GM12878 (cell line): ENCODE measurements at regions of chr6 and their contacts with region 1.

Region 1: DNA sequence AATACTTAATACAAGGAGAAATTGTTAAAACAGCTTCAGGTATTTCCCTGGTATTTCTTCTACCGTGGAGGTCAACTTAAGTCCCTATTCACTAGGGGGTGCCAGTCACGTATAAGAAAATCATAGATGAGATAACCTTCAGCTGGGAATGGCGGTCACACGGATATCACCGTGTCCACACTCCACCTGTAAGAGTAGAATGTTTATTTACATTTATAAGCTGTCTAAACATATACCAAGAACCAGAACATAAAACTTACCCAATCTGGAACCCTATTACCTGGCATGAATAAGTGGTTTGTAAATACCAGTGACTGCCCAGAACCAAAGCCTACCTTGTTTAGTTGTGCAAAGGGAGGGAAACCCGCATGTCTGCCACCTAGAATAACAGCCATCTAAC is 1.9 kb upstream of the ELOVL4 start:
- DNase-seq: peak; percentile 7
- ATAC-seq: peak; percentile 89
- H3K4me3 ChIP-seq: no peak overlapping the region
- H3K27ac ChIP-seq: no peak overlapping the region
- H3K4me1 ChIP-seq: 0 out of 2 replicates have a peak, but pooled peaks cover 3% of the 10 kb centered on the region
- H3K27me3 ChIP-seq: peaks cover 2 to 17% of the 10 kb centered on the region in 2 experiments
- CTCF ChIP-seq: peak; percentile 65 to 71 (median 68)
- EP300 ChIP-seq: no peak
- POLR2A ChIP-seq: no peak
- RAD21 ChIP-seq: peak; percentile 82

Region 2: GRCh38 chr6:79984261-79984660 is 35.0 kb after region 1 on chr6:
- CTCF ChIA-PET with region 1: interaction called, 16 read pairs
- POLR2A ChIA-PET with region 1: no interaction called
- RAD21 ChIA-PET with region 1: no interaction called
- SMC1A ChIA-PET with region 1: interaction called, 5 read pairs
- in situ Hi-C with region 1: no loop called
- intact Hi-C with region 1: no loop called
- DNase-seq: no peak
- ATAC-seq: peak; percentile 63
- H3K4me3 ChIP-seq: no peak overlapping the region
- H3K27ac ChIP-seq: no peak overlapping the region
- H3K4me1 ChIP-seq: no peaks in the 10 kb centered on the region
- H3K27me3 ChIP-seq: no peaks in the 10 kb centered on the region
- CTCF ChIP-seq: no peak
- EP300 ChIP-seq: no peak
- POLR2A ChIP-seq: no peak
- RAD21 ChIP-seq: no peak

Region 3: DNA sequence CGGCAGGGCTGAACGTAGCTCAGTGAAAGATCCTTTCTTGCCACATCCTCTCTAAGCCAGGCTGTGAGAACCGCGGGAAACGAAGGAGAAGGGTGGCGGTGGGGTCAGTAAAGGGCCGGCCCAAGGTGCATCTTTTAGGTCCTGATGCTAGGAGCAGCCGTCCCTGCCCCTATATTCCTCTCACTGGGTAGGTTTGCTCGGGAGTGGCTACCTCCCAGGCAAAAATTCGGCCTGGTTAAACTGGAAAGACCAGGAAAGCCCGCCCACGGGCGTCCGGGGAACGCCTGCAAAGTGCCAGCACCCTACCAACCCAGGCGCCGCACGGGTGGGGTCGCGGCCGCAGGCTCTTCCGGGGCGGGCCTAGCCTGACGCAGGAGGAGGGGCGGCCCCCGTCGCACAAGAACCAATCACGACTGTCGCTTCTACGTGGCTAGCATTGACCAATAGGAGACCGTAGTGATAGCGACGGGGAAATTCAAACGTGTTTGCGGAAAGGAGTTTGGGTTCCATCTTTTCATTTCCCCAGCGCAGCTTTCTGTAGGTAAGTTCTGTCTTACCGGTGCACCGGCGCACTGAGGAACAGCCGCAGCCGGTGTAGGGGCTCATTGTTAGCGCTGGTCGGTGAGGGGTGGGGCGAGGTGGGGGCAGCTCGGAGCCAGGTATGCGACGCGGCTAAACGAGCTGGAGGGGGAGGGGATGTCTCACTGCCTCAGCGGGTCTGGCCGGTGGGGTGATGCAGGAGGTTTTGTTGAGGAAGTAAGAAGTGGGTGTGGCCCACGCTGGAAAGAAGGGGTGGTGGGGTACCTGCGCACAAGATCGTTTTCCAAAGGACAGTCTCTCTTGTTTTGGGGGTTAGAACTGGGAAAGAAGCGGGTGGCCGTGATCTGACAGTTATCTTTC is 55.2 kb after region 1 on chr6 and contains the start of gene TTK:
- CTCF ChIA-PET with region 1: interaction called, 11 read pairs
- POLR2A ChIA-PET with region 1: no interaction called
- RAD21 ChIA-PET with region 1: interaction called, 5 read pairs
- SMC1A ChIA-PET with region 1: interaction called, 7 read pairs
- in situ Hi-C with region 1: no loop called
- intact Hi-C with region 1: no loop called
- DNase-seq: peak; percentile 89
- ATAC-seq: peak; percentile 99
- H3K4me3 ChIP-seq: peak within 1 kb of the TSS; percentile 78
- H3K27ac ChIP-seq: peak within 1 kb of the TSS; percentile 79
- H3K4me1 ChIP-seq: no peaks in the 10 kb centered on the region; the same call in 1 of the 2 replicates
- H3K27me3 ChIP-seq: no peaks in the 10 kb centered on the region
- CTCF ChIP-seq: no peak
- EP300 ChIP-seq: 0 out of 4 replicates have a peak, but pooled peaks of 1 of the 2 experiments have one; percentile 13
- POLR2A ChIP-seq: peak; percentile 77
- RAD21 ChIP-seq: no peak
- polyA plus RNA-seq, gene TTK: 23.8 to 25.6 TPM

Region 4: GRCh38 chr6:80010289-80010688 is 61.1 kb after region 1 on chr6:
- CTCF ChIA-PET with region 1: interaction called, 10 read pairs
- POLR2A ChIA-PET with region 1: no interaction called
- RAD21 ChIA-PET with region 1: interaction called, 3 read pairs
- SMC1A ChIA-PET with region 1: interaction called, 7 read pairs
- in situ Hi-C with region 1: no loop called
- intact Hi-C with region 1: no loop called
- DNase-seq: no peak
- ATAC-seq: peak; percentile 60; the same call in 2 of the 3 replicates
- H3K4me3 ChIP-seq: no peak overlapping the region
- H3K27ac ChIP-seq: no peak overlapping the region
- H3K4me1 ChIP-seq: no peaks in the 10 kb centered on the region
- H3K27me3 ChIP-seq: no peaks in the 10 kb centered on the region
- CTCF ChIP-seq: peak in 1 of 3 experiments; percentile 8; a peak in 2 of 6 replicates
- EP300 ChIP-seq: no peak
- POLR2A ChIP-seq: no peak
- RAD21 ChIP-seq: no peak

Region 5: GRCh38 chr6:80094017-80094416 is 144.8 kb after region 1 on chr6:
- CTCF ChIA-PET with region 1: interaction called, 125 read pairs
- POLR2A ChIA-PET with region 1: no interaction called
- RAD21 ChIA-PET with region 1: interaction called, 34 read pairs
- SMC1A ChIA-PET with region 1: interaction called, 58 read pairs
- in situ Hi-C with region 1: loop called (anchors 25 kb)
- intact Hi-C with region 1: loop called (anchors 1 kb)
- DNase-seq: no peak
- ATAC-seq: peak; percentile 58
- H3K4me3 ChIP-seq: no peak overlapping the region
- H3K27ac ChIP-seq: no peak overlapping the region
- H3K4me1 ChIP-seq: 0 out of 2 replicates have a peak, but pooled peaks cover 2% of the 10 kb centered on the region
- H3K27me3 ChIP-seq: no peaks in the 10 kb centered on the region
- CTCF ChIP-seq: peak; percentile 28 to 58 (median 46); a peak in 5 of 6 replicates
- EP300 ChIP-seq: no peak
- POLR2A ChIP-seq: no peak
- RAD21 ChIP-seq: peak; percentile 67

Region 6: GRCh38 chr6:80263585-80263984 is 314.4 kb after region 1 on chr6:
- CTCF ChIA-PET with region 1: no interaction called
- POLR2A ChIA-PET with region 1: no interaction called
- RAD21 ChIA-PET with region 1: no interaction called
- SMC1A ChIA-PET with region 1: no interaction called
- in situ Hi-C with region 1: no loop called
- intact Hi-C with region 1: no loop called
- DNase-seq: no peak
- ATAC-seq: no peak
- H3K4me3 ChIP-seq: no peak overlapping the region
- H3K27ac ChIP-seq: no peak overlapping the region
- H3K4me1 ChIP-seq: no peaks in the 10 kb centered on the region
- H3K27me3 ChIP-seq: no peaks in the 10 kb centered on the region
- CTCF ChIP-seq: no peak
- EP300 ChIP-seq: no peak
- POLR2A ChIP-seq: no peak
- RAD21 ChIP-seq: no peak

Region 7: DNA sequence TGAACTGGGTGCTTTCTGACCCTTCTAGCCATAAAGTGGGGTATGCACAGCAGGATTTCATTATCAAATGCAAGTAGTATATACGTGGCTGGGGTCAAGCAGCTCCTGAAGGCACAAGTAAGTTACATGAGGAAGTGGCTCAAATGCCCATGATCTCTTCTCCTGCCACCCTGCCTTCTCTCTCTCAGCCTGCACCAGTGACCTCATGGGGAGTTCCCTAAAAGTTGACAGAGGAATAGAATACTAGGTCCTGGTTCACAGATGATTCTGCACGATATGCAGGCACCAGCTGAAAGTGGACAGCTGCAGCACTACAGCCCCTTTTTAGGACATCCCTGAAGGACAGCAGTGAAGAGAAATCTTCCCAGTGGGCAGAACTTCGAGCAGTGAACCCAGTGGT is 439.3 kb after region 1 on chr6:
- CTCF ChIA-PET with region 1: no interaction called
- POLR2A ChIA-PET with region 1: no interaction called
- RAD21 ChIA-PET with region 1: no interaction called
- SMC1A ChIA-PET with region 1: no interaction called
- in situ Hi-C with region 1: no loop called
- intact Hi-C with region 1: no loop called
- DNase-seq: no peak
- ATAC-seq: no peak
- H3K4me3 ChIP-seq: no peak overlapping the region
- H3K27ac ChIP-seq: no peak overlapping the region
- H3K4me1 ChIP-seq: no peaks in the 10 kb centered on the region
- H3K27me3 ChIP-seq: no peaks in the 10 kb centered on the region
- CTCF ChIP-seq: no peak
- EP300 ChIP-seq: no peak
- POLR2A ChIP-seq: no peak
- RAD21 ChIP-seq: no peak